ENCODE measurements at regions of chr17 and their contacts with region 1.

Region 1: DNA sequence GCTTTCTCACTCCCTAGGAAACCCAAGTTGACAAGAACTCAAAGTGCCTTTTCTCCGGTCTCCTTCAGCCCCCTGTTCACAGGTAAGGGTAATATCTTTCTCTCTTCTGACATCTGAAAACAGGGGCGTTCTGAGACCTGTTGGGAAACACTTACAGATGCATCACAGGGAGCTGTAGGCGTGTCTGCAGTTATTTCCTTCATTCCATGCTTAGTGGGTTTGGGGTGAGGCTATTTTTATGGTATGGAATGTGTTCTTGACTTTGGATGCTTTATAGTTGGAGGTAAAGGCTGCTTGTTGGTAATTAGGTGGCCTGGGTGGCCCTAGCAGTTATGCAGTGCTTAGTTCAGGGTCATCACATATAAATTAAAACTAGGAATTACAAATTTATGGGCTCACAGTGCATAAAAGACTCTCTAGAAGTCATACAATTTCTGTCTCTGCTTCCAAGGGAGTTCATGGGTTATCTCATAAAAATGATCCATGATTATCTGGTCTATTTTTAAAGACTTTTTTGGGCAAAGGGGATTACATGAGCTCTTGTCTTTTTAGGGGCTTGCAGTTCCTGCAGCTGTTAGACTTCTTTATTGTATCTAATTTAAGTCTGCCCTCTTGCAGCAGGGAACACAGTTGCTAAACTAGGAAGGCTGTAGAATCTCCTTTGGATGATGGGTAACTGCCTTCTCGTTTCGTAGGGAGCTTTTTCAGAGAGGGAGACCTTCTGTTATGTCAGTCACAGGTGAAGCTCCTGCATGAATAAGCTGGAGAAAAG is 10.2 kb downstream of the SOCS7 start:
- DNase-seq: no peak
- H3K4me3 ChIP-seq: no peak overlapping the region
- H3K27ac ChIP-seq: no peak overlapping the region
- H3K4me1 ChIP-seq: peaks cover 0 to 40% (median 24%) of the 10 kb centered on the region in 4 donors
- H3K27me3 ChIP-seq: no peaks in the 10 kb centered on the region
- CTCF ChIP-seq: no peak

Region 2: DNA sequence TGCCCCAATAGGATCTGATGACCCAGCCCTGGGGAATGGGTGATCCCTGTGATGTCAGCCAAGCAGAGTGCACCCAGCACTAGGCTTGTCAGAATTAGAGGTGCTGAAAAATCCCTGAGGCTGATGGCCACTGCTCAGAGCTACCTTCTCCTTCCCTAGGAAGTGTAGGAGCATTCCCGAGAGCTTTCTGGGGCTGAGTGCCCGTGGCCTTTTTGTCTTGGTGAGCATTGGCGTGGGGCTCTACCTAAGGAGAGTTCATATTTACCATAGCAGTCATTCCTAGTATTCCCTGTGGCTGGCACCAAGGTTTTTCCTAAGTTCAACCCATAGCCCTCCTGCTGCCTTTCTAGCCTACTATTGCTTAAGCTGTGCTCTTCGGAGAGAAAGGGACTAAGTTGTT is 43.8 kb after region 1 on chr17:
- intact Hi-C with region 1: loop called (anchors 2 kb)
- DNase-seq: no peak
- H3K4me3 ChIP-seq: no peak overlapping the region
- H3K27ac ChIP-seq: no peak overlapping the region
- H3K4me1 ChIP-seq: peaks cover 0 to 3% (median 0%) of the 10 kb centered on the region in 4 donors
- H3K27me3 ChIP-seq: no peaks in the 10 kb centered on the region
- CTCF ChIP-seq: no peak

Measured in tibial artery (tissue), 4 donors.